Right lobe of liver (tissue), 6 donors: ENCODE measurements at regions of chr15 and their contacts with region 1.

Region 1: DNA sequence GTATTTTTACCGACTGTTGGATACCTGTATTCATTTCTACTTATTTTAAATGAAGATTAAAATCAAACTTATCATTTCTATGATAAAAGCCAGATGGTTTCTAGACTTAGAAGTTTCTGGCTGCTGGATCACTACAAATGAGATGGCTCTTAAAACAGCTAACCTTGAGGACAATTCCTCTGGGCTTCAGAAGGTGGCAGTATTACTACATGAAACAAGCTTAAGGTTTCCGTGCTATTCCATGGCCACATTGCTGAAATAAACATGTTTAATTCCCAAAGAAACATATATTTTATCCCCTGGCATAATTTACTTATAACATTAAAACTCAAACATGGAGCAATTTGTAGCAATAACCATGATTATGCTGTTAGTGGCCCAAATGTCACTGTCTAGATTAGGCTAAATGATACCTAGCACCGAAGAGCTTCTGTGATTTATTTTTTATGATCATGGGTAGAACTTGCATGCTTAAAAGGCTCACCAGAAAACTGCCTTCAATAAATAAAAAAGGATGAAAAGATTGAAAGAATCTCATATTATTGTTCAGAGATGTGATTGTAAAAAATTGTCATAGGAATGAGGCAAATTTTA is 204.0 kb upstream of the NANOGP8 start:
- DNase-seq: no peak
- ATAC-seq: peak; percentile 82 to 92 (median 90)
- H3K4me3 ChIP-seq: no peak overlapping the region
- H3K27ac ChIP-seq: no peak overlapping the region
- H3K4me1 ChIP-seq: peaks cover 0 to 5% (median 0%) of the 10 kb centered on the region in 4 donors
- H3K27me3 ChIP-seq: no peaks in the 10 kb centered on the region
- CTCF ChIP-seq: peak; percentile 75 to 84 (median 80)
- POLR2A ChIP-seq: no peak

Region 2: DNA sequence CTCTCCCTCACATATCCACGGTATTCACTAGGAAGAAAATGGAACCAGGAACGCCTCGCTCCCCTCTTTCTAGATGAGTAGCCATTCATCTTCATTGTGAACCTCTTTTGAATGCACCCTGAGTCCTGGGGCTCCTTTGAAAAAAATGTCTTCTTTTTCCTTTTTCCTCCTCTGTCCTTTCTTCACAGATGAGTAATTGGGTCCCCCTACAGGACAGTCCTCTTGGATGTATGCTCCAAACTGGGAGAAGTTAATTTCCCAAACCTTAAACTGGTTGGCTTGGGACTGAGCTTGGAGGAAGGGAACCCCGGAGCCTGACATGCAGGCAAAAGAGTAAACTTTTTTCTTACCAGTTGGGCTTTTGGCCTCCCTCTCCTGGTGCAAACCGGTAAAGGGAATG is 148.0 kb after region 1 on chr15:
- intact Hi-C with region 1: loop called (anchors 10 kb)
- DNase-seq: no peak
- ATAC-seq: no peak
- H3K4me3 ChIP-seq: no peak overlapping the region
- H3K27ac ChIP-seq: no peak overlapping the region
- H3K4me1 ChIP-seq: no peaks in the 10 kb centered on the region
- H3K27me3 ChIP-seq: no peaks in the 10 kb centered on the region
- CTCF ChIP-seq: peak in 2 of 4 donors; percentile 14 to 26
- POLR2A ChIP-seq: no peak